GM10248 (cell line): ENCODE measurements at regions of chr1 and their contacts with region 1.

Region 1: GRCh38 chr1:175129997-175130648 is 62.5 kb downstream of the KIAA0040 start:
- DNase-seq: no peak
- CTCF ChIP-seq: no peak

Region 2: GRCh38 chr1:174982971-174983689 is 147.0 kb before region 1 on chr1:
- CTCF ChIA-PET with region 1: no interaction called
- POLR2A ChIA-PET with region 1: no interaction called
- DNase-seq: no peak
- CTCF ChIP-seq: peak; percentile 47

Region 3: DNA sequence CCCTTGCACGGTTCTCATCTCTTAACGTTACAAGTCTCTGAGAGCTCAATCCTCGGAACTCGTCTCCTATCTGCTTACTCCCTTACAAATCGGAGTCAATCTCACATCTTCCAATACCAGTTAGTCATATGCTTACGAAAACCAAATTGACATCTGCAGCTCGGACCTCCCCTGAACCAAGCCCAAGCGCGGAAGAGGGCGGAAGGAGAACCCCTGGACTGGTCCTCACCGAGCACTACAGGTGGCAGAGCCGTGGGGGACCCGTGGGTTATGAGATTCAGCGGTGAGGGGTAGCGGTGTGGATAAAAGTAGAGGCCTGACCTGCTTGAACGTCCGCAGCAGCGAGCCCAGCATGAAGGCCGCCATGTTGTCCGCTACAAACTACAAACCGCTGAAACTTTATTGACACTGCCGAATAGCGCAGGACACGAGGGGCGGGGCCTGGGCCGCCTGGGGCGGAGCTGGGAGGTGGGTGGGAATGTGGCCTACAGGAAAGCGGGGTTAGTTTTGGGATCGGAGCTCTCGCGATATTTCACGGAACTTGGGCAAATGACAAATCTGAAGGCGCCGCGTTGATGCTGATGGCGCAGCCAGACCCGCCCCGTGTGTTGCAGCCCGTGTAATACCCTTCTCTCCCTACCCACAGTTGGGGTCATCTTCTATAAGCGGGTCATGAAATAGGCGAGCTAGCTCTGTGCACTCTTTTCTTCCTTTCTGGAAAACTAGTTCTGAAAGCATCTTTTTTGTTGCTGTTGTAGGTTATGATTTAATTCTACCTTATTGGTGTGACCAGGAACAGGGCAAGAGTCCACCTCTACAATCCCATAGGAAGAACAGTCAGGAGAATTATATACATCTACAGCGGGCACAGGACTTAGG is 106.8 kb before region 1 on chr1 and contains the start of gene MRPS14:
- CTCF ChIA-PET with region 1: interaction called, 80 read pairs
- POLR2A ChIA-PET with region 1: no interaction called
- DNase-seq: peak; percentile 96
- CTCF ChIP-seq: no peak

Region 4: GRCh38 chr1:175118375-175119367 is 11.5 kb before region 1 on chr1:
- CTCF ChIA-PET with region 1: interaction called, 53 read pairs
- POLR2A ChIA-PET with region 1: no interaction called
- DNase-seq: no peak
- CTCF ChIP-seq: no peak